Activated naive CD4-positive, alpha-beta T cell treated with anti-CD3 and anti-CD28 coated beads for 36 hours (primary cell): ENCODE measurements at regions of chr11 and their contacts with region 1.

Region 1: DNA sequence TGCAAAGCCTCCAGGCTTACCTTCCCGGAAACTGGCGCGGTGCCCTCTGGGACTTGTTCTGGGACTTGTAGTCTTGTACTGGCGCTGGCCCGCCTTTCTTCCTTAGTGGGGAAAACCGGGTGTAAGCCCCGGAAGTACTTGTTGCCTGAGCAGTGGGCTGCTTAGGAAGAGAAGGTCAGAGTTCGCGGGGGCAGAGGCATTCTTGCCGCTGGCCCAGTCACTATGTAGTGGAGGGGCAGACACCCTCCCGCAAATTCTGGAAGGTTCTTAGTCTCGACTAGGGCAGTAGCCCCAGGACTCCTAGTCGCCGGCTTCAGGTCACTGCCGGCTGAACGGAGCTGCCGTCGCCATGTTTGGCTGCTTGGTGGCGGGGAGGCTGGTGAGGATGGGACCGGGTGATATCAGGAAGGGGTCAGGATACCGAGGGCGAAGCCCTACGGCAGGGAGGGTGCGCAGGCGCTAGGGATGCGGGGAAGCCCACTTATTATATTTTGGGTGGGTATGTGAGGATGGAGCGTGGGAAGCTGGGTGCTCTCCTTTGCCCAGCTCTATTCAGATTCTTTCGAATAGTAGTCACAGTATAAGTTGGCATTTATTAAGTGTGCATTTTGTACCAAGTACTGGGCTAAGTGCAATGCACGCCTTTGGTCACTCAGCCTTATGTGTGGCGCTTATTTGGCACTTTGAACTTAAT is at the start of gene HIKESHI:
- DNase-seq: peak; percentile 99
- H3K4me3 Mint-ChIP-seq: peak within 1 kb of the TSS; percentile 99
- H3K27ac Mint-ChIP-seq: peak within 1 kb of the TSS; percentile 94
- H3K4me1 Mint-ChIP-seq: peaks cover 26% of the 10 kb centered on the region
- H3K27me3 Mint-ChIP-seq: no peaks in the 10 kb centered on the region
- total RNA-seq, gene HIKESHI: 40.4 to 41.9 TPM

Region 2: GRCh38 chr11:86447763-86448480 is 145.7 kb after region 1 on chr11:
- CTCF ChIA-PET with region 1: no interaction called
- intact Hi-C with region 1: loop called (anchors 2 kb)
- DNase-seq: peak; percentile 63
- H3K4me3 Mint-ChIP-seq: no peak overlapping the region
- H3K27ac Mint-ChIP-seq: no peak overlapping the region
- H3K4me1 Mint-ChIP-seq: peaks cover 24% of the 10 kb centered on the region
- H3K27me3 Mint-ChIP-seq: no peaks in the 10 kb centered on the region